ENCODE measurements at regions of chr9 and their contacts with region 1.

Region 1: GRCh38 chr9:22008736-22009562 is at the start of gene CDKN2B:
- DNase-seq: peak; percentile 66
- H3K4me3 Mint-ChIP-seq: peak within 1 kb of the TSS; percentile 82
- H3K27ac Mint-ChIP-seq: no peak within 1 kb of the TSS
- H3K4me1 Mint-ChIP-seq: peaks cover 36% of the 10 kb centered on the region
- H3K27me3 Mint-ChIP-seq: peaks cover 65% of the 10 kb centered on the region
- total RNA-seq, gene CDKN2B: 0.73 and 0.76 TPM in 2 replicates

Region 2: GRCh38 chr9:21812946-21813568 is 195.9 kb before region 1 on chr9:
- intact Hi-C with region 1: loop called (anchors 1 kb)
- DNase-seq: peak; percentile 47
- H3K4me3 Mint-ChIP-seq: no peak overlapping the region
- H3K27ac Mint-ChIP-seq: peak overlapping the region; percentile 5
- H3K4me1 Mint-ChIP-seq: peaks cover 28% of the 10 kb centered on the region
- H3K27me3 Mint-ChIP-seq: no peaks in the 10 kb centered on the region

Region 3: DNA sequence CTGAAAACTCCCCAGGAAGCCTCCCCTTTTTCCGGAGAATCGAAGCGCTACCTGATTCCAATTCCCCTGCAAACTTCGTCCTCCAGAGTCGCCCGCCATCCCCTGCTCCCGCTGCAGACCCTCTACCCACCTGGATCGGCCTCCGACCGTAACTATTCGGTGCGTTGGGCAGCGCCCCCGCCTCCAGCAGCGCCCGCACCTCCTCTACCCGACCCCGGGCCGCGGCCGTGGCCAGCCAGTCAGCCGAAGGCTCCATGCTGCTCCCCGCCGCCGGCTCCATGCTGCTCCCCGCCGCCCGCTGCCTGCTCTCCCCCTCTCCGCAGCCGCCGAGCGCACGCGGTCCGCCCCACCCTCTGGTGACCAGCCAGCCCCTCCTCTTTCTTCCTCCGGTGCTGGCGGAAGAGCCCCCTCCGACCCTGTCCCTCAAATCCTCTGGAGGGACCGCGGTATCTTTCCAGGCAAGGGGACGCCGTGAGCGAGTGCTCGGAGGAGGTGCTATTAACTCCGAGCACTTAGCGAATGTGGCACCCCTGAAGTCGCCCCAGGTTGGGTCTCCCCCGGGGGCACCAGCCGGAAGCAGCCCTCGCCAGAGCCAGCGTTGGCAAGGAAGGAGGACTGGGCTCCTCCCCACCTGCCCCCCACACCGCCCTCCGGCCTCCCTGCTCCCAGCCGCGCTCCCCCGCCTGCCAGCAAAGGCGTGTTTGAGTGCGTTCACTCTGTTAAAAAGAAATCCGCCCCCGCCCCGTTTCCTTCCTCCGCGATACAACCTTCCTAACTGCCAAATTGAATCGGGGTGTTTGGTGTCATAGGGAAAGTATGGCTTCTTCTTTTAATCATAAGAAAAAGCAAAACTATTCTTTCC is 34.2 kb before region 1 on chr9:
- intact Hi-C with region 1: loop called (anchors 1 kb)
- DNase-seq: no peak
- H3K4me3 Mint-ChIP-seq: peak overlapping the region; percentile 86
- H3K27ac Mint-ChIP-seq: peak overlapping the region; percentile 66
- H3K4me1 Mint-ChIP-seq: peaks cover 40% of the 10 kb centered on the region
- H3K27me3 Mint-ChIP-seq: peaks cover 91% of the 10 kb centered on the region

Region 4: GRCh38 chr9:22037954-22038690 is 29.2 kb after region 1 on chr9:
- intact Hi-C with region 1: loop called (anchors 2 kb)
- DNase-seq: no peak
- H3K4me3 Mint-ChIP-seq: no peak overlapping the region
- H3K27ac Mint-ChIP-seq: no peak overlapping the region
- H3K4me1 Mint-ChIP-seq: peaks cover 41% of the 10 kb centered on the region
- H3K27me3 Mint-ChIP-seq: peaks cover 30% of the 10 kb centered on the region

Region 5: GRCh38 chr9:22238809-22239684 is 230.1 kb after region 1 on chr9:
- intact Hi-C with region 1: loop called (anchors 1 kb)
- DNase-seq: no peak
- H3K4me3 Mint-ChIP-seq: no peak overlapping the region
- H3K27ac Mint-ChIP-seq: no peak overlapping the region
- H3K4me1 Mint-ChIP-seq: peaks cover 50% of the 10 kb centered on the region
- H3K27me3 Mint-ChIP-seq: peaks cover 43% of the 10 kb centered on the region

Region 6: GRCh38 chr9:22452415-22453010 is 443.6 kb after region 1 on chr9:
- intact Hi-C with region 1: loop called (anchors 1 kb)
- DNase-seq: no peak
- H3K4me3 Mint-ChIP-seq: no peak overlapping the region
- H3K27ac Mint-ChIP-seq: no peak overlapping the region
- H3K4me1 Mint-ChIP-seq: no peaks in the 10 kb centered on the region
- H3K27me3 Mint-ChIP-seq: peaks cover 24% of the 10 kb centered on the region

Measured in activated T-helper 1 cell treated with anti-CD3 and anti-CD28 coated beads, Interleukin-12 subunit alpha, Interleukin-12 subunit beta, Interleukin-2, Interleukin-4 antibody, amounts not matched to agents 30 ng/mL and 10 ng/mL and 1 ng/mL, durations not matched to agents 14 hours and 24 hours and 36 hours (primary cell).